PC-9 (cell line): ENCODE measurements at regions of chr2 and their contacts with region 1.

Region 1: DNA sequence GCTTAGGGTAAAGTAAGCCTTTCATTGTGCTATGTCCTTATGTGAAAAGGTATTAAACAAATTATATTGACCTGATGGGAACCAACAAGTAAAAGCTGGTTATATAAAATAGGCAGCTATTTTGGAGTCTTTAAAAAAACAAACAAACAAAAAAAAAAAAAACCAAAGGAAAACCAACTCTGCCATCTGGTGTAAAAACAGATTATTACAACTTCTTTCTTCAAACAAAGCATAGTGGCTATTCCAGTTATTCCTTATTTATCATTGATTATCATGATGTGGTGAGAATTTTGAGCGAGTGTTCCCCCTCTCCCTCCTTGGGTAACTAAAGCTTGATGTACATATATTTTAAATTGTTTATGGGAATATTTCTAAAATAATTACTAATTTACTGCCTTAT is 122.4 kb upstream of the FHL2 start:
- DNase-seq: no peak
- H3K4me3 ChIP-seq: no peak overlapping the region
- H3K27ac ChIP-seq: no peak overlapping the region
- H3K4me1 ChIP-seq: peaks cover 6% of the 10 kb centered on the region
- H3K27me3 ChIP-seq: no peaks in the 10 kb centered on the region
- CTCF ChIP-seq: peak; percentile 84

Region 2: DNA sequence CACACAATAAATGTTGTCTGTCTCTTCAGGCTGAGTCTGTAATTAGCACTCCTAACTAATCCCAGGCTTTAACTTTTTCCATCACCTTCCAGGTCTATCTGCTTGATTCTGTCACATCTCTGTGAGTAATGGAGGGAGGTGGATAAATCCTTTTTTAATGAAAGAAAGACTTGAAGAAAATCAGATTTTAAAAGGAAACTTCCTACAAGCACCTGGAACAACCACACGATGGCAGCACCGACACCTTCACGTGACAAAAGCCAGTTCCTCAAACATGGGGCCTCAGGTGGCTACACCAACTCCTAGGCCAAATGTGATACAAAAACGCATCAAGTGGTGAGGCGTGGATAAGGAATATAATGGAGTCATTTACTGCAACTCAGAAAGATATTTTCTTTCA is 233.5 kb before region 1 on chr2:
- CTCF ChIA-PET with region 1: no interaction called
- POLR2A ChIA-PET with region 1: interaction called, 12 read pairs
- intact Hi-C with region 1: loop called (anchors 5 kb)
- DNase-seq: peak in 1 of 2 experiments; percentile 17
- H3K4me3 ChIP-seq: no peak overlapping the region
- H3K27ac ChIP-seq: no peak overlapping the region
- H3K4me1 ChIP-seq: no peaks in the 10 kb centered on the region
- H3K27me3 ChIP-seq: no peaks in the 10 kb centered on the region
- CTCF ChIP-seq: peak; percentile 51

Region 3: GRCh38 chr2:105344704-105345345 is 176.4 kb before region 1 on chr2:
- CTCF ChIA-PET with region 1: interaction called, 18 read pairs
- POLR2A ChIA-PET with region 1: interaction called, 10 read pairs
- intact Hi-C with region 1: loop called (anchors 1 kb)
- DNase-seq: peak; percentile 18 to 45
- H3K4me3 ChIP-seq: no peak overlapping the region
- H3K27ac ChIP-seq: no peak overlapping the region
- H3K4me1 ChIP-seq: no peaks in the 10 kb centered on the region
- H3K27me3 ChIP-seq: no peaks in the 10 kb centered on the region
- CTCF ChIP-seq: peak; percentile 75

Region 4: GRCh38 chr2:105398699-105399432 is 122.3 kb before region 1 on chr2 and contains the start of gene FHL2:
- CTCF ChIA-PET with region 1: no interaction called
- POLR2A ChIA-PET with region 1: no interaction called
- intact Hi-C with region 1: loop called (anchors 2 kb)
- DNase-seq: peak; percentile 61 to 81
- H3K4me3 ChIP-seq: peak within 1 kb of the TSS; percentile 100
- H3K27ac ChIP-seq: peak within 1 kb of the TSS; percentile 88
- H3K4me1 ChIP-seq: peaks cover 74% of the 10 kb centered on the region
- H3K27me3 ChIP-seq: no peaks in the 10 kb centered on the region
- CTCF ChIP-seq: peak; percentile 41; the same call in 1 of the 2 replicates
- total RNA-seq, gene FHL2: 109 and 117 TPM in 2 replicates

Region 5: GRCh38 chr2:105454801-105455485 is 66.3 kb before region 1 on chr2:
- CTCF ChIA-PET with region 1: no interaction called
- POLR2A ChIA-PET with region 1: no interaction called
- intact Hi-C with region 1: loop called (anchors 2 kb)
- DNase-seq: peak; percentile 63 to 97
- H3K4me3 ChIP-seq: peak overlapping the region; percentile 13; the same call in 1 of the 2 replicates
- H3K27ac ChIP-seq: peak overlapping the region; percentile 100
- H3K4me1 ChIP-seq: peaks cover 51% of the 10 kb centered on the region
- H3K27me3 ChIP-seq: no peaks in the 10 kb centered on the region
- CTCF ChIP-seq: peak; percentile 70

Region 6: GRCh38 chr2:106065983-106066820 is 545.0 kb after region 1 on chr2:
- CTCF ChIA-PET with region 1: no interaction called
- POLR2A ChIA-PET with region 1: no interaction called
- intact Hi-C with region 1: no loop called
- DNase-seq: no peak
- H3K4me3 ChIP-seq: no peak overlapping the region
- H3K27ac ChIP-seq: no peak overlapping the region
- H3K4me1 ChIP-seq: no peaks in the 10 kb centered on the region
- H3K27me3 ChIP-seq: peaks cover 38% of the 10 kb centered on the region
- CTCF ChIP-seq: no peak